SK-N-SH (cell line): ENCODE measurements at regions of chr12 and their contacts with region 1.

Region 1: GRCh38 chr12:56315622-56316473 is at the start of gene CNPY2:
- DNase-seq: peak; percentile 95
- H3K4me3 ChIP-seq: peak within 1 kb of the TSS; percentile 83 to 86
- H3K27ac ChIP-seq: peak within 1 kb of the TSS; percentile 84 to 91
- H3K4me1 ChIP-seq: peaks cover 12 to 13% of the 10 kb centered on the region in 2 experiments; a peak in 3 of 4 replicates
- H3K27me3 ChIP-seq: no peaks in the 10 kb centered on the region
- CTCF ChIP-seq: peak; percentile 24; the same call in 1 of the 2 replicates
- EP300 ChIP-seq: no peak; a peak in 1 of 4 replicates
- RAD21 ChIP-seq: peak; percentile 55
- polyA plus RNA-seq, gene CNPY2: 191 and 196 TPM in 2 replicates

Region 2: DNA sequence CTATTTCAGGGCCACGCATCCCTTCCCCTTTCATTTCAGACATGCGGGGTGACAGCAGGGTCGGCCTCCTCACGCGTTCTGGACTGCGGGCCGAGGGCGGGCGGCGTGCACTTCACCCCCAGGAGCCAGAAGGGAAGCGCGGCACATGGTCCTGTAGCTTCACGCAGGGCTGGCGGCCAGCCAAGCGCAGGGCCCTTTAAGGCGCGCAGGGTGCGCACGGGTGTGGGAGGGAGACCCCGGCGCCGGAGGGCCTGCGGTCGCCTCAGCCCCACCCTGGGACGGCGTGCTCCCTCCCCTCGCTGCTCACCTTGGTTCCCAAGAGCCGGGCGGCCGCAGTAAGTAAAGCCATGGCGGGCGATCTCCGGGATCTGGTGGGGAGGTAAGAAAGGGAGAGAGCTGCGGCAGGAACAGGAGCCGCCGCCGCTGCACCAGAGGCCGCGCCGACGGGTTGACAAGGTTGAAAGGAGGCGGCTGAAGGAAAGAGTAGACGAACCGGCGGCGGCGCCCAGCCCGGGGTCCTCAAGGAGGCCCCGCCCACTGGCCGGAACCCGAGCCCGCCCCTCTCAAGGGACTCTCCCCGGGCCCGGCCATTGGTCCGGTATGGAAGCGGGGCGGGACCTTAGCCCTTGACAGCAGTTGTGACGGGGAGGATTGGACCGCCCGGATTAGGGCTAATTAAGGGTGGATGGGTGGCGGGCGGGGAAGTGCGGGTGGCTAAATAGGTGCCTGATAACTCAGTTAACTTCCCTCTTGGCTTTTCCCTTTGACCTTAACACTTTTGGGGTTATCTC is 15.8 kb before region 1 on chr12 and contains the start of gene CS:
- CTCF ChIA-PET with region 1: interaction called, 4 read pairs
- POLR2A ChIA-PET with region 1: interaction called, 12 read pairs
- DNase-seq: peak; percentile 97
- H3K4me3 ChIP-seq: peak within 1 kb of the TSS; percentile 78 to 92
- H3K27ac ChIP-seq: peak within 1 kb of the TSS; percentile 83 to 85
- H3K4me1 ChIP-seq: peaks cover 14 to 27% of the 10 kb centered on the region in 2 experiments; a peak in 2 of 4 replicates
- H3K27me3 ChIP-seq: no peaks in the 10 kb centered on the region
- CTCF ChIP-seq: no peak
- EP300 ChIP-seq: no peak
- RAD21 ChIP-seq: no peak
- polyA plus RNA-seq, gene CS: 121 and 149 TPM in 2 replicates

Region 3: DNA sequence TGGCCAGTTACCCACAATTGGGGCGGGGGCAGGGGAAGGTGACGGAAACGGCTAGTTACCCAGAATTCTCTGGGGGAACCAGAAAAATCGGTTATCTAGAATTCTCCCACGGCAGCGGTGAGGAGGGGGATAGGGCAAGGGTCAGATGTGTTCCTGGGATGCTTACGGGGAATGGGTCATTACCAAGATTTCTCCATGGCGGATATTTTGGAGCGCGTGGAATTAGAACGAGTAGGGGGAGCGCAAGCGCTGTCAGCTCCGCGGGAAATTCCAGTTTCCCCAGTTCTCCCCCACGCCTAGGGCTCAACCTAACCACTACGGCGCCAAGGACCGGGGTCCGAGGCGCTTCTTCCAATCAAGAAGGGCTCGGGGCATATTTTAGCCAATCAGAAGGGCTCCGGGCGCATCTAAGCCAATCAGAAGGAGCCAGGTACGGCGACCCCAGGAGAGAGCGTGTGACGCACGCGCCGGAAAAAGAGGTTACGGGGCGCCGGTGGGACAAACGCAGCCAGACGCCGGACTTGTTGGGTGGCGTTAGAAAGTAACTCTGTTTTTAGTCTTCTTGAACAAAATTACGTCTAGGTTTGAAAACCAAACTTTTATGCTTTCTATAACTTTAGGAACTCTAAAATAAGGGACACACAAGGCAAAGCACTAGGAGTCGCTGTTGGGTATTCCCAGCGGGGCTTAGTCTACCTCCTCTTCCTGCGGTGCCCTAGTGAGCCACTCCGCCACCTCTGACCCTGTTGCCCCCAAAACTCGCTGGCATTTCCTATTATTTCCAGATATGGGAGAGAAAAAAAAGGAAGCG is 18.0 kb after region 1 on chr12 and contains the start of gene PAN2:
- CTCF ChIA-PET with region 1: interaction called, 4 read pairs
- POLR2A ChIA-PET with region 1: interaction called, 15 read pairs
- DNase-seq: peak; percentile 93
- H3K4me3 ChIP-seq: peak within 1 kb of the TSS; percentile 61 to 73
- H3K27ac ChIP-seq: peak within 1 kb of the TSS; percentile 84 to 97
- H3K4me1 ChIP-seq: peaks cover 4 to 8% of the 10 kb centered on the region in 2 experiments; a peak in 1 of 4 replicates
- H3K27me3 ChIP-seq: no peaks in the 10 kb centered on the region
- CTCF ChIP-seq: peak; percentile 80
- EP300 ChIP-seq: no peak
- RAD21 ChIP-seq: no peak
- polyA plus RNA-seq, gene PAN2: 37.1 and 66.9 TPM in 2 replicates

Region 4: DNA sequence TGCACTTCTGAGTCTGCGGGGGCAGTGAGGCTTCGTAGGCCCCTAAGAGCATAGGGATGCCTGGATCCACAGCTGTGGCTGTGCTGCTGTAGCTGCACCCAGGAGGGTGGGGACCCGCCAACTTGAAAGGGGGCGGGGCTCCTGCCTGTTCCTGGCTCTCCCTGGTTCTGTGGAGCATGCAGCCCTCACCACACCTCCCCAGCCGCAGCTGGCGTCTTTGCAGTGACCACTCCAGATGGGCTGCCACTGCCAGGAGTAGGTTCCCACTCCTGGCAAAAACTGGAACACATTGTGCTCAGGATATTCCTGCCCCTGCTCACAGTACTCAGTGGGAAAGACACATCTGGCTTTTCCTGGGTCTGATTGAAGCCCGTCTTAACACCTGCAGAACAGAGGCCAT is 97.5 kb after region 1 on chr12:
- CTCF ChIA-PET with region 1: no interaction called
- POLR2A ChIA-PET with region 1: no interaction called
- DNase-seq: no peak
- H3K4me3 ChIP-seq: no peak overlapping the region
- H3K27ac ChIP-seq: no peak overlapping the region
- H3K4me1 ChIP-seq: no peaks in the 10 kb centered on the region; a peak in 1 of 4 replicates
- H3K27me3 ChIP-seq: no peaks in the 10 kb centered on the region
- CTCF ChIP-seq: no peak
- EP300 ChIP-seq: no peak
- RAD21 ChIP-seq: no peak

Region 5: GRCh38 chr12:56462565-56462964 is 146.7 kb after region 1 on chr12:
- CTCF ChIA-PET with region 1: interaction called, 15 read pairs
- POLR2A ChIA-PET with region 1: no interaction called
- DNase-seq: no peak
- H3K4me3 ChIP-seq: no peak overlapping the region
- H3K27ac ChIP-seq: no peak overlapping the region
- H3K4me1 ChIP-seq: no peaks in the 10 kb centered on the region; a peak in 1 of 4 replicates
- H3K27me3 ChIP-seq: no peaks in the 10 kb centered on the region
- CTCF ChIP-seq: no peak
- EP300 ChIP-seq: no peak
- RAD21 ChIP-seq: no peak